GM18951 (cell line): ENCODE measurements at regions of chr3 and their contacts with region 1.

Region 1: DNA sequence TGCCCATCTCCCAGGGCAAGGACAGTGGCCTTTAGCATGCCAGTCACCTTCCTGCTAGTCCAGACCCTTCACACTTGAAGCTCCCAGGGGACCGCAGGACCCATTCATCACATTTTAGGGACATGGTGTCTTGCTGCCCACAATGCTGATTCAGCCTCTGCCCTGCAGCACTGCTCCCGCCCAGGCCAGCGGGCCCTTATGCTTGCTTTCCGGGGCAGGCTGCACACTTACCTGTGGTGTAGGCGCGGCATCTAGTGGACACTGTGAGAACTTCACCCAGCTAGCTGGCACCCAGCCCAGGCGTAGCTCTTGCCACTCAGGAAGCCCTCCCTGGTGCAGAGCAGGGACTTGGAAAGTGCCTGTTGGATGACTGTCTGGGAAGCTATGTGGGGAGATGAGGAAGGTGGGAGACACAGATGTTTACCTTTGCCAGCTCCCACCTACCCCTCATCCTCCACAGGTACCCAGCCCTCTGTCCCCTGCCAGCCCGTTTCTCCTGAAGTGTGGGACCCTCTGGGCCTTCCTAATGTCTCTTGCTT is 26.2 kb upstream of the NR2C2 start:
- POLR2A ChIP-seq: no peak

Region 2: GRCh38 chr3:14633819-14634424 is 287.2 kb before region 1 on chr3:
- in situ Hi-C with region 1: loop called (anchors 10 kb)
- POLR2A ChIP-seq: no peak

Region 3: DNA sequence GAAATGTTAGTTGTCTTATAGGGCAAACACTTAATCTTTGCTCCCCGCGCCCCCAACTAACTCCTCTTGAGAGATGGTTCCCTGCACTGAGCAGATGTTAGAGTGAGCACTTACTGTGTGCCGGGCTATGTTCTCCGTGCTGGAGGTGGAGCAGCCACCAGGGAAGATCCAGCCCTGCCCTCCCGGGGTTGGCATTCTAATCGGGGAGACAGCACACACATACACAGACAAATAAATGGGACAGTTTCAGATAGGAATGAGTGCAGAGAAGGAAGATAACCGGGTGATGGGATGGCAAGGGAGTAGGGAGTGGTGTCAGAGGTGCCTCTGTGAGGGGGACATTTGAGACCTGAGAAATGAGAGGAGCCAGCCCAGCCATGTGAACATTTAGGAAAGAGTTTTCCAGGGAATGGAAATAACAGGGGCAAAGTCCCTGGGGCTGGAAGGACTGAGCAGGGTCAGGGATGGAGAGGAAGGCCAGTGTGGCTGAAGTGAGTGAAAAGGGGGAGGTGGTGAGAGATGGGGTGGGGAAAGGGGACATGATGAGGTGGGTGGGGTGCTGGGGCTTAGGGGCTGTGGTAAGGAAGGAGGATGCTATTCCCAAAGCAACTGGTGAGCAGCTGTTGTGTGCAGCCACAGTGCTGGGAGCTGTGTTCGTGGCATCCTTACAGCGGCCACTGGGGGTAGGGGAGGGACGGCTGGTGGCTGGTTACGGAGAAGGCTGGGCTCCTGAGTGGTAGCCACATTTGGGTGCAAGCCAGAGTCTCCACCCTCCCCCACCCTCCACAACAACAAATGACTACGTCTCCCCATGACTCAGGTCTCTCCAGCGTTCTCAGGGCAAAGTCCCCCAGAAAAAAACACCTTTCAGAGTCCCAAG is 117.8 kb before region 1 on chr3:
- in situ Hi-C with region 1: loop called (anchors 10 kb)
- POLR2A ChIP-seq: no peak